Right ventricle myocardium superior (tissue), 1 donor: ENCODE measurements at regions of chr7 and their contacts with region 1.

Region 1: DNA sequence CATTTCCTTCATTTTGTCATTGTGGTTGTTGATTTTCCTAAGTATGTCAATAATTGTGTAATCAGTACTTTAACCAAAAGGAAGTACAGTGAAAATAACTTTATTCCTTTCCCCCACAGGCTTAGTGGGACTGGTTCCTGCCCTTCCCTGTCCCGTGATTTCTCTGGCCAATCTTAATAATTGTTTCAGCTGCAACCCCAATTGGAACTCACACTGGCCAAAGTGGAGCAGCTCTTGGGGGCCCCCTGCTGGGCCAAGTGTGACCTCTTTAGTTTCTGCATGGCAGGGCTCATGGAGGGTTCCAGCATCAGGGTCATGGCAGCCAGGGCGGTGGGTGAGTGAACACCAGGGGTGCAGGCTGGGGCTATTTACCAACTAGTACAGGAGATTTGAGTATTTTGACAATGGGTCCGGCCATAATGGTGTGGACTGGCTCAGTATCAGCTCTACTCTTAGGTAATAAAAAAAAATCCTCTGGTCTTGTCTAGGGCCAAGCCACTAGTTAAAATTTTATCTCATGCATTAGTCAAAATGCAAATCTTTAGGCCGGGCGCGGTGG is 31.7 kb downstream of the CYCS start:
- DNase-seq: peak; percentile 79
- ATAC-seq: peak; percentile 94

Region 2: DNA sequence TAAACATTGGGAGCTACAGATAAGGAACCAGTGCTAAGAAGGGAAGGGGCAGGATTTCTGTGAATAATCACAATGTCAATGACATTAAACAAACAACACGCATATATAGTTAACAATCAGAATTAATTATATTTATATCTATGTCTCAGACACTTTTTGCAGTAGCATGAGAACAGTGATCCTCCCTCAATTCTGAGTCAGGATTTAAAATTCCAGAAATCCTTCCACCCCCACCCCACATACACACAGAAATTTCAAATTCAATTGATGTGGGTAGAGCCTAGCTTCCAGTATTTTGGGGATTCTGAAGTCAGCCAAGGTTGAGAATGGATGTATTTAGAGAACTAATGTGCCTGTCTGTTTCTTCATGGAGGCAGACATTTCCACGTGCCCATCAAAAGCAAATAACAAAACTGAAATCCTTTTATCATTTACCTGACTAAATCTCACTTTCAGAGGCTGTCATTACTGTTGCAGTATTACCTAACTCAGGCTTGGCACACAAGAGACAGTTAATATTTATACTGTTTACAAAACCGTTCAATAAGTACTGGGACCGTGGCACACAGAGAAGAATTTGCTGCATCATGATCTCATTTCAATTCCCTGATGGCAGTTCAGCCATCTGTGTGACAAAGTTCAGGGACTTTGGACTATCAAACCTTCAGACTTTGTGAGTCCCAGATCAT is 636.7 kb before region 1 on chr7:
- intact Hi-C with region 1: no loop called
- DNase-seq: no peak
- ATAC-seq: no peak

Region 3: DNA sequence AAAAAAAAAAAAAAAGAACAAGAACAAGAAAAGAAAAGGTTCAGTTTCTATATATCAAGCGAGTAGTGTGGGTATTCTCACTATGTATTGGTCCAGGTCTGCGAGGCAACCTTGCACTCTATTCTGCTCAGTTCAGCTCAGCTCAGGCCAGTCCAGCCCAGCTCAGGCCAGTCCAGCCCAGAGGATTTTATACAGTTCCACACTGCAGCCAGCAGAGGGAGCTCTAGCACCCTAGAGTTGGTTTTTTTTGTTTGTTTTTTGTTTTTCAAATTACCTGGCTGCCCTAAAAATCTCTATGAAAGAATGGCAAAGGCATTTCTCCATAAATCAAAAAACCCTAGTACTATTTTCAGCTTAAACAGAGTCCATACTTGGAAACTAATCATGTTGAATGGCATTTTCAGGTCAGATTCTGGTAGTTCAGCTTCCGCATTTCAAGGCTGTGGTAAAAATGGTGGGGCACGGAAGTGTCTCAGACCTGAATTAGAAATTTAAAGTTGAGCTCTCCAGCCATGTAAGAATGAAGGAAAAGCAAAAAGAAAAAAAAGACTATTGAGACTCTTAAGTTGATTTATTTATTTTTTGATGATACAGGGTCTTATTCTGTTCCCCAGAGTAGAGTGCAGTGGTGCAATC is 280.9 kb before region 1 on chr7:
- intact Hi-C with region 1: loop called (anchors 5 kb)
- DNase-seq: peak; percentile 56
- ATAC-seq: peak; percentile 85

Region 4: DNA sequence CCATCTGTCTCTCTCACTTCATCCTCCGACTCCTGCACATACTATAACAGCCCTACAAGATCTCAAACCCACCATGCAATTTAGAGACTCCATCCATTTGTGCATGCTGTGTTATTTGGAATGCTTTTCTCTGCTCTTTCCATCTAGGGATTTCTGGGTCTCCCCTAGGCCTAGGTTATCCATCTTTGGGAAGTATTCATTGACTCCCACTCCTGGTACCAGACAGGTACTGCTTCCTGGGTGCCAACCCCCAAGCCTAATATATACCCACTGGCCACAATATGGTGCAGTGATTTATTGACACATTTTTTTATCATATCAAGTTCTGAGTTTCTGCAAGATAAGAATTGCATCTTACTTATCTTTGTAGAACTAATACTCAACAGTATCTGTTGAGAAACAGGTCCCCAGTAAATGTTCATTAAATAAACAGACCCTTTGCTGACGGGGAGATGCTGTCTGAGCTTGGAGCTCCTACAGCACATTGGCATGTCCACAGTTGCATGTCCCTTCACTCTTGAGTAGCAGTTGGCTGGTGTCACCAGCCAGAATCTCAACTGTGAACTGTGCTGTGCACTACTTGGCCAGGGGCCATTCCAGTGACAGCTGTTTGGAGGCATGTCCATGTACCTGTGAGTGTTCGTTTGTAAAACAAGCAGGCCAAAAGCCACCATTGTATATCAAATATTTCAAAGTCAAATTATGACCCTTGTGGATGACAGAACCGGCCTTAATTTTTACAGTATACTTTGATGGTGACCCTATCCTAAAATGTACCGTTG is 835.4 kb after region 1 on chr7:
- intact Hi-C with region 1: no loop called
- DNase-seq: no peak
- ATAC-seq: no peak